ENCODE measurements at regions of chr9 and their contacts with region 1.

Region 1: DNA sequence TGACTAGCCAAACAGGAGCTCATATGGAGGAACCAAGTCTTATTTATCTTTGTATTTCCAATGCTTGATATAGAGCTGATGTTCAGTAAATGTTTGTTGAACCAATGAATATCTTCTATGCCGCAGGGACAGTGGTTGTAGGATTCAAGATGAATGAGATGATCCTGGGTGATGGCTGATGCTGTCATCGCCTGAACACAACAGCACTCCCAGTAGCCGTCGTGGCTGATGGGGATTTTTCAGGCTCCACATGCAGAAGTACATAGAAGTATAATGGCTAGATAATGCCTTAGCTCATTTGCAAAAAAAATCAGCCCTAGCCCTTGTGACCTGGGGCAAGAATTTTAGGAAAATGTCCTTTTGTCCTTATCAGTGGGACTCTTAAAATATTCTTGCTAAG is 69.0 kb upstream of the OR13F1 start:
- DNase-seq: no peak
- H3K4me3 ChIP-seq: no peak overlapping the region
- H3K27ac ChIP-seq: no peak overlapping the region
- H3K4me1 ChIP-seq: no peaks in the 10 kb centered on the region
- H3K27me3 ChIP-seq: no peaks in the 10 kb centered on the region
- CTCF ChIP-seq: no peak
- POLR2A ChIP-seq: no peak

Region 2: DNA sequence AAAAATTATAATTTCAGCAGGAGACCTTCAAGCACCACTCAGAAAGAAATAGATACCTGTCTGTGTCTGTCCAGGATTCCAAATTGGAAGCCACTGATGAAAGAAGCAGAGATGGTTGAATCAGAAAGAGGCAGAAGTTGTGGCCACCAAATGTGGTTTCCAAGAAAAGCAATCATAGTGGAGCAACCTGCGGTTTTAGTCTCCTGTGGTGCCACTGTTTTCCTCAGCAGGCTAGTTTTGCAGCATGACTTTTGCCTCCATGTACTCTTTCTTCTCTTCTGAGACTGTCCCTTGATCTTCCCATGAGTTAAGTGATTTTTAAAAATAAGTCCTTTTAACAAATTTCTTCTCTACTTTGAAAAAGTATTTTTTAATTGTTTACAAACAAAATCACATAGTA is 904.1 kb before region 1 on chr9:
- intact Hi-C with region 1: loop called (anchors 5 kb)
- DNase-seq: no peak
- H3K4me3 ChIP-seq: no peak overlapping the region
- H3K27ac ChIP-seq: no peak overlapping the region
- H3K4me1 ChIP-seq: no peaks in the 10 kb centered on the region
- H3K27me3 ChIP-seq: no peaks in the 10 kb centered on the region
- CTCF ChIP-seq: no peak
- POLR2A ChIP-seq: no peak

Region 3: DNA sequence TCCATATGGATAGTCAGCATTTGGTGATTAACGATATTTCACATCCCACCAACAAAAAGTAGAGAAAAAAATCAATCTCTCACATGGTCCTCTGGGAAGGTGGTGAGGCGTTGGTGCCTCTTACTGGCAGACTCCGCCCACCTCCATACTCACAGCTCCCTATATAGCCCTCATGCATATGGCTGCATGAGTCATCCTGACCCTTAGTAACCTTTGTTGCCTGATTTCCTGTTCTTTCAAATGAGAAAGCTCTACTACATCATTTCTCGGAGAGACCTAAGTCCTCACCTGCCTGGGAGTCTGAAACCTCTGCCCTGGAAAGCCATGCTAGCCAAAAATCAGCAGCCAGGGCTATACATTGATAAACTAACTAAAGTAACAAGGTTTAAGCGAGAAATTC is 526.2 kb after region 1 on chr9:
- intact Hi-C with region 1: no loop called
- DNase-seq: no peak
- H3K4me3 ChIP-seq: no peak overlapping the region
- H3K27ac ChIP-seq: no peak overlapping the region
- H3K4me1 ChIP-seq: no peaks in the 10 kb centered on the region
- H3K27me3 ChIP-seq: no peaks in the 10 kb centered on the region
- CTCF ChIP-seq: no peak
- POLR2A ChIP-seq: no peak

Region 4: GRCh38 chr9:105483618-105484017 is 1048.6 kb after region 1 on chr9:
- intact Hi-C with region 1: loop called (anchors 10 kb)
- DNase-seq: no peak
- H3K4me3 ChIP-seq: no peak overlapping the region
- H3K27ac ChIP-seq: no peak overlapping the region
- H3K4me1 ChIP-seq: no peaks in the 10 kb centered on the region
- H3K27me3 ChIP-seq: no peaks in the 10 kb centered on the region
- CTCF ChIP-seq: no peak
- POLR2A ChIP-seq: no peak